ENCODE measurements at regions of chr2 and their contacts with region 1.

Region 1: GRCh38 chr2:182866461-182867406 is at the start of gene FRZB:
- DNase-seq: peak; percentile 15 to 89
- H3K4me3 ChIP-seq: peak within 1 kb of the TSS; percentile 51 to 81
- H3K27ac ChIP-seq: peak within 1 kb of the TSS; percentile 78 to 83
- H3K4me1 ChIP-seq: peaks cover 3 to 9% of the 10 kb centered on the region in 2 donors
- H3K27me3 ChIP-seq: no peaks in the 10 kb centered on the region
- CTCF ChIP-seq: peak in 1 of 3 experiments; percentile 9
- total RNA-seq, gene FRZB: 42.5 TPM

Region 2: DNA sequence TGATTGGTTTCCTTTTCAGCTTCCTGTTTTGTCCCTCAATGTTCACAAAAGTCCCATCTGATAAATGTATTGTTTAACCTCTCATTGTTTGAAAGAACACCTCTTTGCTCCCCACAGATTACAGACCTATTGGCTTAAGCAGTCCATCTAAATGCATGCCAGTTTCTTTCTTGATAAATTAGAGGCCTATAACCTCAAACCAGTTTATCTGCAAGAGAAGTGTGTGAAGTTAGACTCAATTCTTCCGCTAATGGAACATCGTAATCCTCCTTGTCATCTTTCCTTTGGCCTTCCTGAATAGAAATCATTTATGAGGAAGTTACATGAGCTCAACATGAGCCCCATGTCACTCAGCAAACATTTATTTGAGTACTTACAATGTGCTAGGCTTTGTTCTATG is 74.3 kb before region 1 on chr2:
- intact Hi-C with region 1: loop called (anchors 5 kb)
- DNase-seq: no peak
- H3K4me3 ChIP-seq: no peak overlapping the region
- H3K27ac ChIP-seq: peak overlapping the region; percentile 45 to 63
- H3K4me1 ChIP-seq: peaks cover 0 to 5% of the 10 kb centered on the region in 2 donors
- H3K27me3 ChIP-seq: no peaks in the 10 kb centered on the region
- CTCF ChIP-seq: no peak

Region 3: DNA sequence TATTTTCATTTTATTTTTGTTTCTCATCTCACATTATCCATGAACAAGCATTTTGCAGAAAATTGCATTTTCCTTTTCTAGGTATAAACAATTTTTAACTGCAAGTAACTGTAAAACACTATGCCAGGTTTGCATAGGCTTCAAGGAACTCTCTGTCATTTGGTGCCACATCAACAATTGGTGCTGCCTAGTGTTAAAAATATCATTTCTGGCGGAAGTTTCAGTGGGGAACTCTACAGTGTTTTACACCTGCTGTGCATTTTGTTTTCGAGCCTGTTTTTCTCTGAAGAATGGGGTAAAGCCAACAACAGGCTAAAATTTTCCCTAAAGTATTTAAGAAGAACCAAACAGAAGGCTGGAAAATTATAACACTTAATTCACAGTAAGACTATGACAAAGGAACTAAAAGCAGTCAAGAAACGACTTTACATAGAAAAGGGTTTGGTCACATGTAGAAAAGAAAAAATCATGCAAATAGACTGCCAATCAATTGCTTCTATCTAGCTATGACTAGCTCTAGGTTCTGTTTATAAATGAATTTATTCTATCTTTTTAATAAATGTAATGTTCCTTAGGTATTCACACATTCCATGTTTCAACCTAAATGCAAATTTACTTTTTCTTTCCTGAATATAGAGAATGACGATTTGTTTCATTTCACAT is 21.1 kb after region 1 on chr2:
- intact Hi-C with region 1: loop called (anchors 2 kb)
- DNase-seq: no peak
- H3K4me3 ChIP-seq: no peak overlapping the region
- H3K27ac ChIP-seq: no peak overlapping the region
- H3K4me1 ChIP-seq: peaks cover 0 to 16% of the 10 kb centered on the region in 2 donors
- H3K27me3 ChIP-seq: no peaks in the 10 kb centered on the region
- CTCF ChIP-seq: no peak

Region 4: GRCh38 chr2:182897137-182897536 is 30.4 kb after region 1 on chr2:
- intact Hi-C with region 1: loop called (anchors 5 kb)
- DNase-seq: no peak
- H3K4me3 ChIP-seq: no peak overlapping the region
- H3K27ac ChIP-seq: peak overlapping the region; percentile 83 to 85
- H3K4me1 ChIP-seq: peaks cover 6 to 26% of the 10 kb centered on the region in 2 donors
- H3K27me3 ChIP-seq: no peaks in the 10 kb centered on the region
- CTCF ChIP-seq: no peak

Region 5: DNA sequence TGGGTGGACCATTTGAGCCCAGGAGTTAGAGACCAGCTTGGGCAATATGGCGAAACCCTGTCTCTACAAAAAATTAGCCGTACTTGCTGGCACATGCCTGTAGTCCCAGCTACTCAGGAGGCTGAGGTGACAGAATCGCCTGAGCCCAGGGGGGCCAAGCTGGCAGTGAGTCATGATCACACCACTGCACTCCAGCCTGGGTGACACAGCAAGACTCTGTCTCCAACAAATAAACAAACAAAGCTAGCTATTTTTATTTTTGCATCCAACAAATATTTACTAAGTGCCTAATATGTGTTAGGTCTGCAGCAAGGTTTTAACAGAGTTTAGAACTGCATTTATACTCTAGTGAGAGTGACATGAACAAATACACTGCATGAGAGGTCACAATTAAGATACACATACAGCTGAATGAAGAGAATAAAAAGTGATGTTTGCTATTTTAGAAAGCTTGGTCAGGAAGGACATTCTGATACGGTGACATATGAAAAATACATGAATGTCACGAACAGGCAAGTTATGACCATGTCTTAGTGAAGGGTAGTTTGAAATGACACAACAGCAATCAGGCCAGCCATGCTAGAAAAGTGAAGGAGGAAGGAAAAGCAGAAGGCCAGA is 82.9 kb after region 1 on chr2:
- intact Hi-C with region 1: loop called (anchors 5 kb)
- DNase-seq: no peak
- H3K4me3 ChIP-seq: no peak overlapping the region
- H3K27ac ChIP-seq: peak overlapping the region; percentile 1 to 20
- H3K4me1 ChIP-seq: peaks cover 0 to 11% of the 10 kb centered on the region in 2 donors
- H3K27me3 ChIP-seq: no peaks in the 10 kb centered on the region
- CTCF ChIP-seq: no peak